Activated CD4-positive, alpha-beta T cell treated with anti-CD3 and anti-CD28 coated beads, Interleukin-2, amount 10 ng/mL, durations not matched to agents 24 days and 14 days (primary cell): ENCODE measurements at regions of chr2 and their contacts with region 1.

Region 1: DNA sequence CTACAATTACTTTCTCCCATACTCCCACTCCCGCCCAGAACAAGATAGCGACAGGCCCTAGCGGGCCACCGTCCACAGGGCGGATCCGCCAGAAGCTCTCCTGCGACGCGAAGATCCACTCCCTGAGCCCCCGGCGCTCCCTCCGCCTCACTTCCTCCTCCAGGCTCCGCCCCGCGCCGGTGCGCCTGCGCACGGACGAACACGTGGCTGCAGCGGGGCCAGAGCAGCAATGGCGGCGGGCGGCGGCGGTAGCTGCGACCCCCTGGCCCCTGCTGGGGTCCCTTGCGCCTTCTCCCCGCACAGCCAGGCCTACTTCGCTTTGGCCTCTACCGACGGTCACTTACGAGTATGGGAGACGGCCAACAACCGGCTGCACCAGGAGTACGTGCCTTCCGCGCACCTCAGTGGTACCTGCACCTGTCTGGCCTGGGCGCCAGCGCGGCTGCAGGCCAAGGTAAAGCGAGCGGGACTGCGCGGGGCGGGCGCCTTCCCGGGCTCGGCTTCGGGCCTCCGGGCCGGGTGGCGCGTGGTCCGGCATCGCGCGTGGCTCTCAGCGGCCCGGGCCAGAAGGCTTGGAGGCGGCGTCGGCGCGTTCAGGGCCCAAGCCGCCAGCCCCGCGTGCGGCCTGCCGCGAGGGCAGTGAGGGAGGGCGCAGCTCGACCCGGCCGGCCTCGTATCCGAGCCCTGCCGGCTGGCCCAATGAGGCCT is at the start of gene WDR43:
- DNase-seq: peak; percentile 100
- H3K4me3 Mint-ChIP-seq: peak within 1 kb of the TSS; percentile 99
- H3K27ac Mint-ChIP-seq: peak within 1 kb of the TSS; percentile 95
- H3K4me1 Mint-ChIP-seq: peaks cover 32% of the 10 kb centered on the region
- H3K27me3 Mint-ChIP-seq: no peaks in the 10 kb centered on the region
- total RNA-seq, gene WDR43: 181 and 190 TPM in 2 replicates

Region 2: GRCh38 chr2:28855193-28855592 is 39.4 kb before region 1 on chr2:
- intact Hi-C with region 1: no loop called
- DNase-seq: no peak
- H3K4me3 Mint-ChIP-seq: no peak overlapping the region
- H3K27ac Mint-ChIP-seq: no peak overlapping the region
- H3K4me1 Mint-ChIP-seq: no peaks in the 10 kb centered on the region
- H3K27me3 Mint-ChIP-seq: no peaks in the 10 kb centered on the region

Region 3: DNA sequence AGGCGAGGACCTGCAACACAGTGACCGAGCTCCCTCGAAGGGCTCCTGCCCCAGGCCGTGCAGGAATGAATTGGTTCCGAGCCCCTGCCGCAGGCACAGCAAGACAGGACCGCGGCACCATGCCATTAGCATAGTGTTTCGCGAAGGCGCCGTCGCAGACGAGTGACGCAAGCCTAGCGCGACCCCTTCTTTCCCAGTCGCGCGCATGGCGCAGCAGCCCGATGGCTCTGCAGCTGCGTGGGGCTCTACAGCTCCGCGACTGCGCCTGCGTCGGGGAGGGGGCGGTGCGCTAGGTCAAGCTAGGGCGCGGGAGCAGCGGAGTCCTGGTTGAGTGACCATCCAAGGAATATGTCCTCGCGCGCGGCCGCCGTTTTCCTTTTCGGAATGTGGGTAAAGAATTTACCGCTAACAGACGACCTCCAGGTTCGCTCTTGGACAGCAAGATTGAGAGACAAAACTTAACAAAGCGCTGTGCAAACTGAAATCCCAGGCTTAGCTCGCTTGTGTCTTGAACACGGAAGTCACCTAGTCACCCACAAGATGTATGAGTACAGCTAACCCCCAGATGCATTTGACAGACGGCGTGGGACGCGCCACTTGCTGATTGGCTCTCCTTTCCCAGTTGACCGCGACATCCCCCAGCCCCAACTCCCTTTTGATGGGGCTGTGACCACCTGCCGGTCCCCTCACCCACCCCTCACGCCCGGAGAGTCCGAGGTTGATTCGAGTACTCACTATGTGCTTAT is 24.3 kb before region 1 on chr2 and contains the start of gene TRMT61B:
- intact Hi-C with region 1: loop called (anchors 1 kb)
- DNase-seq: peak; percentile 100
- H3K4me3 Mint-ChIP-seq: peak within 1 kb of the TSS; percentile 94
- H3K27ac Mint-ChIP-seq: peak within 1 kb of the TSS; percentile 97
- H3K4me1 Mint-ChIP-seq: peaks cover 20% of the 10 kb centered on the region
- H3K27me3 Mint-ChIP-seq: peaks cover 9% of the 10 kb centered on the region
- total RNA-seq, gene TRMT61B: 18.9 and 20.1 TPM in 2 replicates

Region 4: GRCh38 chr2:29053670-29054400 is 159.2 kb after region 1 on chr2:
- intact Hi-C with region 1: no loop called
- DNase-seq: no peak
- H3K4me3 Mint-ChIP-seq: no peak overlapping the region
- H3K27ac Mint-ChIP-seq: no peak overlapping the region
- H3K4me1 Mint-ChIP-seq: no peaks in the 10 kb centered on the region
- H3K27me3 Mint-ChIP-seq: no peaks in the 10 kb centered on the region

Region 5: DNA sequence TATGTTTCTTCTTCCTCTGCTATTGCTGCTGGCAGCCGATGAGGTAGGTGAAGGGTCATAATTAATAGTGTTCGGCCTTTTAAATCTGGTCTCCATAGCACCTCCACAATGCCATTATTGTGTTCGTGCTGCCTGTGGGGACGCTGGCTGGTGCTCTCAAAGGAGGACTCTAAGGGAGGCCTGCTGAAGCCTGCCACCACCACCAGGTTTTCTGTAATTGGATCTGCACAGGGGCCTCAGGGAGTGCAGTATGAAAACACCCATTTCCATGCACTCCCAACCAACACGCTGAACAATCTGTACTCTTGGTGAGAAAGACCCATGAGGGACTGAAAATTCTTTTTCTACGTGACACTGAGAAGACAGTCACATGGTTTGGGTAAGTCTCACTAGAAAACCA is 202.9 kb after region 1 on chr2:
- intact Hi-C with region 1: no loop called
- DNase-seq: no peak
- H3K4me3 Mint-ChIP-seq: no peak overlapping the region
- H3K27ac Mint-ChIP-seq: no peak overlapping the region
- H3K4me1 Mint-ChIP-seq: peaks cover 3% of the 10 kb centered on the region
- H3K27me3 Mint-ChIP-seq: peaks cover 14% of the 10 kb centered on the region

Region 6: GRCh38 chr2:29115797-29116781 is 221.5 kb after region 1 on chr2:
- intact Hi-C with region 1: loop called (anchors 2 kb)
- DNase-seq: peak; percentile 93
- H3K4me3 Mint-ChIP-seq: peak overlapping the region; percentile 85
- H3K27ac Mint-ChIP-seq: peak overlapping the region; percentile 91
- H3K4me1 Mint-ChIP-seq: peaks cover 43% of the 10 kb centered on the region
- H3K27me3 Mint-ChIP-seq: peaks cover 5% of the 10 kb centered on the region